ENCODE measurements at regions of chr2 and their contacts with region 1.

Region 1: DNA sequence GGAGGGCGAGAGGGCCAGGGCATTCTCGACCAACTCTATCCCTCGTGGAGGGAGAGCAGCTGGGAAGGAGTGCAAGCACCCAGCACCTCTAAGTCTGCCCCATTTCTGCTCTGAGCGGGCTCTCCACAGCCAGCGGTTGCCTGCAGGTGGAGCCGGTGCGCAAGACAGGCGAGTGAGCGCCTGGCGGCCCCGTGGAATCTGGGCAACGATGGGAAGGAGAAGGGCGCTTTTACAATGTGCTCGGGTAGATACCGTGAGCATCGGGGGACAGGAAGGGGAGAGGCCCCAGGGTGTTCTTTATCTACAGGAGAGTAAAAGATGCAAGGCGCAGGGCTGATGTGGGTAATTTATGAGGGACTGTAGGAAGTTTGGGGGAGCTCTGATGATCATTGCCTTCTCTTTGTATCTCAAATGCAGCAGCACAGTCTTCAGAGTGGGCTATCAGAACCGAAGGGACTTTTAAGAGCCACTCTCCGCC is 867 bp upstream of the TTL start:
- DNase-seq: peak; percentile 72 to 91 (median 79)
- ATAC-seq: peak; percentile 81
- H3K4me3 ChIP-seq: peak overlapping the region; percentile 77
- H3K4me3 Mint-ChIP-seq: peak overlapping the region; percentile 93
- H3K27ac ChIP-seq: peak overlapping the region; percentile 48 to 75
- H3K27ac Mint-ChIP-seq: peak overlapping the region; percentile 85
- H3K4me1 ChIP-seq: peaks cover 28% of the 10 kb centered on the region
- H3K4me1 Mint-ChIP-seq: peaks cover 25% of the 10 kb centered on the region
- H3K27me3 ChIP-seq: no peaks in the 10 kb centered on the region
- H3K27me3 Mint-ChIP-seq: no peaks in the 10 kb centered on the region
- CTCF ChIP-seq: peak; percentile 84

Region 2: GRCh38 chr2:112173646-112174319 is 307.3 kb before region 1 on chr2:
- CTCF ChIA-PET with region 1: no interaction called
- POLR2A ChIA-PET with region 1: no interaction called
- intact Hi-C with region 1: no loop called
- DNase-seq: peak in 2 of 14 experiments; percentile 11 to 21
- ATAC-seq: peak; percentile 46
- H3K4me3 ChIP-seq: no peak overlapping the region
- H3K4me3 Mint-ChIP-seq: peak overlapping the region; percentile 50
- H3K27ac ChIP-seq: peak overlapping the region in 1 of 2 donors; percentile 29
- H3K27ac Mint-ChIP-seq: peak overlapping the region; percentile 71
- H3K4me1 ChIP-seq: peaks cover 20% of the 10 kb centered on the region
- H3K4me1 Mint-ChIP-seq: peaks cover 30% of the 10 kb centered on the region
- H3K27me3 ChIP-seq: no peaks in the 10 kb centered on the region
- H3K27me3 Mint-ChIP-seq: no peaks in the 10 kb centered on the region
- CTCF ChIP-seq: no peak

Region 3: DNA sequence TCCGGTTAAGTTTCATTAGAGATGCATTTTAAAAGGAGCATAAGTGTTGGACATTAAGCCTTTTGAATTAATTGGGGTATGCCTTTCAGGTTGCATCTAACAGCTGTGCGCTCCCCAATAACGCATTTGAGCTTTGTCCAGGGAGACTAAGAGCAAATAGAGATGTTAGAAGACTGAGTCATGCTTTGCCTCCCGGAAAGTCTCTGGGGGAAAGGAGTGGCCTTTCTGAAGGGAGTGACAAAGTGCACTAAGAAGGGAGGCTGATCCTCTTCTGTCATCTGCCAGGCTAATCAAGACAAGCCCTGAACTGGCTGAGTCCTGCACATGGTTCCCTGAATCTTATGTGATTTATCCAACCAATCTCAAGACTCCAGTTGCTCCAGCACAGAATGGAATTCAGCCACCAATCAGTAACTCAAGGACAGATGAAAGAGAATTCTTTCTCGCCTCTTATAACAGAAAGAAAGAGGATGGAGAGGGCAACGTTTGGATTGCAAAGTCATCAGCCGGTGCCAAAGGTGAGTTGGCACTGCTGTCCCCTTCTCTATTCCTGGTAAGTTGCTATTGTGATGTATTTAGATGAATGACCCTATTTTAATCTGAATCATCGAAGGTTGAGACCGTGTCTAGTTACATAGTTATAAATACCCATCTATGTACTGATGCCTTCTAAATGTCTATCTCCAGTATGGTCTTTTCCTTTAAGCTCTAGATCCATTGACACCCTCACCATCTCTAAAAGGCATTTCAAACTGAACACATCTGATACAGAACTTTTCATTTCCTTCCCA is 13.0 kb after region 1 on chr2:
- CTCF ChIA-PET with region 1: interaction called, 22 read pairs
- POLR2A ChIA-PET with region 1: interaction called, 5 read pairs
- intact Hi-C with region 1: no loop called
- DNase-seq: no peak
- ATAC-seq: no peak
- H3K4me3 ChIP-seq: no peak overlapping the region
- H3K4me3 Mint-ChIP-seq: no peak overlapping the region
- H3K27ac ChIP-seq: no peak overlapping the region
- H3K27ac Mint-ChIP-seq: no peak overlapping the region
- H3K4me1 ChIP-seq: no peaks in the 10 kb centered on the region
- H3K4me1 Mint-ChIP-seq: no peaks in the 10 kb centered on the region
- H3K27me3 ChIP-seq: no peaks in the 10 kb centered on the region
- H3K27me3 Mint-ChIP-seq: no peaks in the 10 kb centered on the region
- CTCF ChIP-seq: no peak

Region 4: GRCh38 chr2:112542123-112542983 is 61.3 kb after region 1 on chr2 and contains the start of gene POLR1B:
- CTCF ChIA-PET with region 1: interaction called, 6 read pairs
- POLR2A ChIA-PET with region 1: no interaction called
- intact Hi-C with region 1: loop called (anchors 2 kb)
- DNase-seq: peak in 13 of 14 experiments; percentile 54 to 85 (median 62)
- ATAC-seq: peak; percentile 81
- H3K4me3 ChIP-seq: peak within 1 kb of the TSS; percentile 94
- H3K4me3 Mint-ChIP-seq: no peak within 1 kb of the TSS
- H3K27ac ChIP-seq: peak within 1 kb of the TSS; percentile 81 to 93
- H3K27ac Mint-ChIP-seq: no peak within 1 kb of the TSS
- H3K4me1 ChIP-seq: peaks cover 24% of the 10 kb centered on the region
- H3K4me1 Mint-ChIP-seq: peaks cover 23% of the 10 kb centered on the region
- H3K27me3 ChIP-seq: no peaks in the 10 kb centered on the region
- H3K27me3 Mint-ChIP-seq: no peaks in the 10 kb centered on the region
- CTCF ChIP-seq: no peak
- total RNA-seq, gene POLR1B: 9.2 to 11.5 TPM

Region 5: DNA sequence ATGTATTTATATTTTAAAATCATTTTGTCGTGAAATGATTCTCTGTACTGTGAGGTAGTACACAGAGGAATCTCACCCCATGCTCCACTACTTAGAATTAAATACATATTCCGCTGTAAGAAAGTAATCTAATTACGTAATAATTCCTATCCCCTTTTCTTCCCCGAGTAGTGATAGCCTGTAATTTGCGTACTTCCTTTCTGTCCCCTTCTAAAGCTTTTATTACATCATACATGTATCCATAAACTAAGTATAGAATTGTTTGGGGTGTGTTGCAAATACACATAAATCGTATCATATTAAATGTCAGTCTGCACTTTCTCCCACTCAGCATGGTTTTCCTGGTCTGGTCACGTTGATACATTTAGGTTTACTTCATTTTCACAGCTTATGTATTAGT is 90.9 kb after region 1 on chr2:
- CTCF ChIA-PET with region 1: no interaction called
- POLR2A ChIA-PET with region 1: no interaction called
- intact Hi-C with region 1: no loop called
- DNase-seq: no peak
- ATAC-seq: no peak
- H3K4me3 ChIP-seq: no peak overlapping the region
- H3K4me3 Mint-ChIP-seq: no peak overlapping the region
- H3K27ac ChIP-seq: no peak overlapping the region
- H3K27ac Mint-ChIP-seq: no peak overlapping the region
- H3K4me1 ChIP-seq: no peaks in the 10 kb centered on the region
- H3K4me1 Mint-ChIP-seq: no peaks in the 10 kb centered on the region
- H3K27me3 ChIP-seq: no peaks in the 10 kb centered on the region
- H3K27me3 Mint-ChIP-seq: no peaks in the 10 kb centered on the region
- CTCF ChIP-seq: no peak